Activated CD4-positive, alpha-beta T cell treated with anti-CD3 and anti-CD28 coated beads for 36 hours (primary cell): ENCODE measurements at regions of chr12 and their contacts with region 1.

Region 1: DNA sequence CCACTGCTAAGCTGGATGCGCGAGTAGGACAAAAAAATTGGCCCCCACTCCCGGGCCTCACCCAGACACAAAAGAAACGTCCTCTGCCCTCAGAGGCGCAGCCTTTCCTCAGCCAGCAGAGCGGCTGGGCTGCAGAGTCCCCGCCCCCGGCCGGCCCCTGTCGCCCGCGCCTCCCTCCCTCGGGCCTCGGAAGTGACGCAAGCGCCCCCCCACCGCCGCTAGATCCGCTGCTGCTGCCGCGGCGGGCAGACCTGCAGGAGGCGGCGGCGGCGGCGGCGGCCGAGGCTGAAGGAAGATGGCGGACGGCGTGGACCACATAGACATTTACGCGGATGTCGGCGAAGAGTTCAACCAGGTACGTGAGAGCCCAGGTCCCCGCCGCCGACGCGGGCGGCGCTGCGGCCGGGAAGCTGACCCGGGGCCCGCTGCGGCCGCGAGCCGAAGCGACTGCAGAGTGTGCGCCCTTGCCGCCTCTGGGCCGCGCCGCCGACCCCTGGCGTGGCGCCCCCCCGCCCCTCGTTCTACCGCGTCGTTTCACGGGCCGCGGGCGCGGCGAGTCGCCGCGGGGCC is at the start of gene CPSF6:
- DNase-seq: peak; percentile 99
- ATAC-seq: peak; percentile 90
- H3K4me3 Mint-ChIP-seq: peak within 1 kb of the TSS; percentile 100
- H3K27ac Mint-ChIP-seq: peak within 1 kb of the TSS; percentile 99
- H3K4me1 Mint-ChIP-seq: peaks cover 48% of the 10 kb centered on the region
- H3K27me3 Mint-ChIP-seq: no peaks in the 10 kb centered on the region
- total RNA-seq, gene CPSF6: 107 to 109 TPM

Region 2: GRCh38 chr12:68807576-68808387 is 431.7 kb before region 1 on chr12 and contains the start of gene MDM2:
- CTCF ChIA-PET with region 1: no interaction called
- POLR2A ChIA-PET with region 1: no interaction called
- intact Hi-C with region 1: loop called in 1 of 2 experiments (anchors 1 kb)
- DNase-seq: peak; percentile 96
- ATAC-seq: peak; percentile 89
- H3K4me3 Mint-ChIP-seq: peak within 1 kb of the TSS; percentile 88
- H3K27ac Mint-ChIP-seq: peak within 1 kb of the TSS; percentile 99
- H3K4me1 Mint-ChIP-seq: peaks cover 34% of the 10 kb centered on the region
- H3K27me3 Mint-ChIP-seq: no peaks in the 10 kb centered on the region
- total RNA-seq, gene MDM2: 114 to 119 TPM

Region 3: GRCh38 chr12:68932961-68933893 is 306.2 kb before region 1 on chr12 and contains the start of gene CPM:
- CTCF ChIA-PET with region 1: no interaction called
- POLR2A ChIA-PET with region 1: no interaction called
- intact Hi-C with region 1: loop called in 1 of 2 experiments (anchors 5 kb)
- DNase-seq: peak; percentile 86
- ATAC-seq: peak; percentile 98
- H3K4me3 Mint-ChIP-seq: peak within 1 kb of the TSS; percentile 80
- H3K27ac Mint-ChIP-seq: peak within 1 kb of the TSS; percentile 71
- H3K4me1 Mint-ChIP-seq: peaks cover 9% of the 10 kb centered on the region
- H3K27me3 Mint-ChIP-seq: peaks cover 20% of the 10 kb centered on the region
- total RNA-seq, gene CPM: 18.0 to 18.7 TPM

Region 4: GRCh38 chr12:69254046-69254445 is 14.6 kb after region 1 on chr12:
- CTCF ChIA-PET with region 1: interaction called, 39 read pairs
- POLR2A ChIA-PET with region 1: interaction called, 3 read pairs
- intact Hi-C with region 1: loop called in 1 of 2 experiments (anchors 1 kb)
- DNase-seq: no peak
- ATAC-seq: peak; percentile 91
- H3K4me3 Mint-ChIP-seq: no peak overlapping the region
- H3K27ac Mint-ChIP-seq: peak overlapping the region; percentile 59
- H3K4me1 Mint-ChIP-seq: peaks cover 37% of the 10 kb centered on the region
- H3K27me3 Mint-ChIP-seq: no peaks in the 10 kb centered on the region

Region 5: DNA sequence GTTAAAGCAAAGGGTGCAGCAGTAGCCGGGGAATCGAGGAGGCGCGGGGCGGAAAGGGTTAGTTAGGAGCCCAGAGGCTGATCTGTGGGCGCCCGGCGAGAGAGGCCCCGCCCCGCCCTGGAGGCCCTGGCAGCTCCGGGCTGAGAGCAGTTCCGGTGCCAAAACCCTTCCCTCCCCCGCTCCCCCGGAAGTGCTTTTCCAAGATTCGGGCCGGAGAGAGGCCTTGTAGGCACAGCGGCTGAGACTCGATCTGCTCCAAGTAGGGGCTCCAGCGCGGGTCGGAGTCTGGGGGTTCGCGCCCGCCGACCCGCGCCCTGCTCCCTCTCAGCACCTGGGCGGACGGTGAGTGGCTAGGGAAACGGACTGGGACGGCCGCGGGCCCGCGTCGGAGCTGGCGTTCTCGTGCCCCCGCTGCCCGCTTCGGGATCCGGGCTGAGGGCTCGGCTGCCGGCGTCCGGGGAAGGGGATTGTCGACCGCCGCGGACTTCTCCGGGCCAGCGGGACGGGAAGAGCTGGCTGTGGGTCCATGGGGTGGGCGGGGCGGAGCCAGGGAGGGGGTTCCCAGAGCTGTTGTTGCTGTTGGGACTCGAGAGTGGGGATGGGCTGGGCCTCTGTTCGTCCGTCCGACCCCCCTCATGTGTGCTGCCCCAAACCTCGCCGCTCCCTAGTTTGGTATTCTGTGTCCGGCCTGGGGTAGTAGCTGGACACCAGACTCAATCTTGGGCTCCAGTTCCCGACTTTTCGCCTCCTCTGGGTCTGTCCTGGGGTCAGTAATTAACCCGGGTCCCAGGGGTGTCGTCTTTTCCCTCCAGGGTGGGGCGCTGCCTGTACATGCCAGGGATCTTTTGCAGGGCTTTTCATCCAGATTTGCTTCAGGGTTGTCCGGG is 231.0 kb after region 1 on chr12 and contains the start of gene FRS2:
- CTCF ChIA-PET with region 1: no interaction called
- POLR2A ChIA-PET with region 1: no interaction called
- intact Hi-C with region 1: loop called in 1 of 2 experiments (anchors 1 kb)
- DNase-seq: peak; percentile 93
- ATAC-seq: peak; percentile 99
- H3K4me3 Mint-ChIP-seq: peak within 1 kb of the TSS; percentile 92
- H3K27ac Mint-ChIP-seq: peak within 1 kb of the TSS; percentile 99
- H3K4me1 Mint-ChIP-seq: peaks cover 52% of the 10 kb centered on the region
- H3K27me3 Mint-ChIP-seq: no peaks in the 10 kb centered on the region
- total RNA-seq, gene FRS2: 9.5 to 10.4 TPM

Region 6: DNA sequence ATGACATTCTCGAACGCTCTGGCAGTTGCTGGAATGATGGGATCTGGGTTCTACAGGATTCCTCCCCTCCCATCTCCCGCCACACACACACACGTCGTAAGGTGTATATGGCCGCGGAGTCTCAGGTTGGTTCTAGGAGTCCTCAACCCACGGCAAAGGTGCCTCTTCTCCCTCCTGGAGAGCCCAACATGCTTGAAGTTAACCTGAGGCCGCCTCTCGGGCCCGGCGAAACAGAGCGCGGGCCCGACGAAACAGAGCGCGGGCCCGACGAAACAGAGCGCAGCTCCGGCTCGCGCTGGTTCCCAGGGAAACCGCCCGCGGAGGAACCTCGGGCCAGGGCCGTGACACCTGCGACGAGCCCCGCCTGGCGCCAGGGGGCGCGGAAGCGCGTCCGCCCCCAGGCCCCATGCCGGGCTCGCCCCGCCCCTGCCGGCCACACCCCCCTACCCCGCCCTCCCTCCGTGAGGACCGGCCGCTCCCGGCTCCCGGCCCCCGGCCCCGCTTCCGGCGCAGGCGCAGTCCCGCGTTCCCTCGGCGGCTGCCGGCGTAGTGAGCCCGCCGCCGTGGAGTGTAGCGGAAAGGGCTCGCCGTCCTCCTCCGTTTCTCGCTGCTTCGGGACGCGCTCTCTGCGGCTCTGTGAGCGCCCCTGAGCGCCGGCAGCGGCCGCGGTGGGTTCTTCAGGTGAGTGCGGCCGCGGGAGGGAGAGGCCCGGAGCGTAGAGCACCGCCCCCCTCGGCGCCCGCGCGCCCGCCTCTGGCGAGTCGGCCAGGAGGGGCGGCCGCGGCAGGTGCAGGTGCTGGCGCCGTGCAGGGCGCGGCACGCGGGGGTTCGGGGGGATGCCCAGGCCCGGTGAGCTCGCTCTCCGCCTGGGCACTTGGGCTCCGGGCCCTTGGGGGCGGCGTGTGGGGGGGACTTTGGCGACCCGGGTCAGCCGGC is 499.2 kb after region 1 on chr12 and contains the start of gene RAB3IP:
- CTCF ChIA-PET with region 1: no interaction called
- POLR2A ChIA-PET with region 1: interaction called, 3 read pairs
- intact Hi-C with region 1: loop called (anchors 1 to 2 kb)
- DNase-seq: peak; percentile 97
- ATAC-seq: peak; percentile 88
- H3K4me3 Mint-ChIP-seq: peak within 1 kb of the TSS; percentile 79
- H3K27ac Mint-ChIP-seq: peak within 1 kb of the TSS; percentile 75
- H3K4me1 Mint-ChIP-seq: peaks cover 26% of the 10 kb centered on the region
- H3K27me3 Mint-ChIP-seq: peaks cover 10% of the 10 kb centered on the region
- total RNA-seq, gene RAB3IP: 30.7 to 39.9 TPM

Region 7: DNA sequence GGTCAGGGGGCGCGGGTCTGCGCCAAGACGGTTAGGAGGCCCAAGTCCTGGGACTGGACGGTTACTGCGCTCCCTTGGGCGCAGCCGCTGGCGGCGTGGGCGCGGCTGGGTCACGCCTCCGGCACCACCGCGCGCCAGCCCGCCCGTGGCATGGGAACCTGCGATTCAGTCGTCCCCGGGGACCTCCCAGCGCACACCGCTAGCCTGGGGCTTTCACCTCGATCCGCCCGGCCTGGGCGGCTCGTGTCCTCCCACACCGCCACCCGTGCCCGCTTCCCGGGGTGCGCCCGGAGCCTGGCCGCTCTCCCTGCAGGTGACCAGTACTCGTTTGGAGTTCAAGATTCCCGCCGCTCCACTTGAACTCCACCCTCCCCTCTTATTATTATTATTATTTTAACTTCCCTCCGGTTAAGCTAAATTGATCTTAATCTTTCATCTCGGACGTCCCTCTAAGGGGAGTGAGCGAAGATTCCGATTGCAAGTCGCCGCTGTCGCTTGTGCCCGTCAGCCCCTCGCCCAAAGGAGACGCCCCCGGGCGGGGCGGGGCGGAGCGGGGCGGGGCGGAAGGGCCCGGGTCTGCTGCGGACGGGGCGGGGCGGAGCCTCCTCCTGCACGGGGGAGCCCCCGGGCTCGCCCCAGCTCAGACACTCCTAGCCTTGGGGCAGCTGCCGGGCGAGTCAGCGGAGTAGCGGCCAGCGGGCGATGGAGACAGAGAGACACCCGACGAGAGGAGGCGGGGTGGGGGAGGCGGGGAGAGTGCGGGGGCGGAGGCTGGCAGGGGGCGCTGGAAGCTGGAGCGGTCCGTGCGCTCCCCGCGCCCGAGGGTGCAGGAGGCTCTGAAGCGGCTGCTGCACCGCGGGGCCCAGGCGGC is 1126.4 kb after region 1 on chr12 and contains the start of gene KCNMB4:
- CTCF ChIA-PET with region 1: no interaction called
- POLR2A ChIA-PET with region 1: no interaction called
- intact Hi-C with region 1: loop called in 1 of 2 experiments (anchors 5 kb)
- DNase-seq: peak; percentile 88
- ATAC-seq: peak; percentile 91
- H3K4me3 Mint-ChIP-seq: peak within 1 kb of the TSS; percentile 86
- H3K27ac Mint-ChIP-seq: peak within 1 kb of the TSS; percentile 34
- H3K4me1 Mint-ChIP-seq: peaks cover 17% of the 10 kb centered on the region
- H3K27me3 Mint-ChIP-seq: peaks cover 6% of the 10 kb centered on the region
- total RNA-seq, gene KCNMB4: 0.94 to 2.1 TPM